AG04450 (cell line): ENCODE measurements at regions of chr5 and their contacts with region 1.

Region 1: DNA sequence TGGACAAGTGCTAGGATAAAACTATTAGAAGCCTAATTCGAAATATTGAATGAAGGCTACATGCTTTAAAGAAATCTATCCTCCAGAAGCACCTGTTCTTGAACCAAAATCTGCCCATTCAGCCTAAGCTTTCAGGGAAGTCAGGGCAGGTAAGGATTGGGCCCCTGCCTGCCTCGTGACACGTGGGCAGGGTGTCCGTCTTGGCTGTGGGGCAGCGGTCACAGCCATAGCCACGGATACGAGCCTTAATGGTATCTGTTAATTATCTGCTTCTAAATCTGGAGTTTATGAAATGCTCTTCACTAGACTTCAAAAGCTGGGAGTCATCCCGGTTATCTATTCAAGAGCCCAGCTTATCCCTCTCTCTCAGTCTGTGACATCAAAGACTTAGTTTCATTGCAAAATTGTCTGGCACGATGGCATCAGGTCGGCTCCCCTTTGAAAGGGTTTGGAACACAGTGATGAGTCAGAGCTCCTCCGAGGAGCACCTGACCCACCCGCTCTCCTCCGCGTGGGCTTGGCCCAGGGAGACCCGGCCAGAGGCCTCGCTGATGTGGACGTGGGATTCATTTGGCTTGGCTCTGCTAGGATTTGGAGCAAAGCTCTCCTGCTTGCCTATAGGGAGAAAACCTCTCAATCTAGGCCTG is 135.9 kb downstream of the MACROH2A1 start:
- DNase-seq: no peak
- H3K4me3 ChIP-seq: no peak overlapping the region
- H3K27ac ChIP-seq: no peak overlapping the region
- H3K27me3 ChIP-seq: no peaks in the 10 kb centered on the region
- CTCF ChIP-seq: no peak

Region 2: DNA sequence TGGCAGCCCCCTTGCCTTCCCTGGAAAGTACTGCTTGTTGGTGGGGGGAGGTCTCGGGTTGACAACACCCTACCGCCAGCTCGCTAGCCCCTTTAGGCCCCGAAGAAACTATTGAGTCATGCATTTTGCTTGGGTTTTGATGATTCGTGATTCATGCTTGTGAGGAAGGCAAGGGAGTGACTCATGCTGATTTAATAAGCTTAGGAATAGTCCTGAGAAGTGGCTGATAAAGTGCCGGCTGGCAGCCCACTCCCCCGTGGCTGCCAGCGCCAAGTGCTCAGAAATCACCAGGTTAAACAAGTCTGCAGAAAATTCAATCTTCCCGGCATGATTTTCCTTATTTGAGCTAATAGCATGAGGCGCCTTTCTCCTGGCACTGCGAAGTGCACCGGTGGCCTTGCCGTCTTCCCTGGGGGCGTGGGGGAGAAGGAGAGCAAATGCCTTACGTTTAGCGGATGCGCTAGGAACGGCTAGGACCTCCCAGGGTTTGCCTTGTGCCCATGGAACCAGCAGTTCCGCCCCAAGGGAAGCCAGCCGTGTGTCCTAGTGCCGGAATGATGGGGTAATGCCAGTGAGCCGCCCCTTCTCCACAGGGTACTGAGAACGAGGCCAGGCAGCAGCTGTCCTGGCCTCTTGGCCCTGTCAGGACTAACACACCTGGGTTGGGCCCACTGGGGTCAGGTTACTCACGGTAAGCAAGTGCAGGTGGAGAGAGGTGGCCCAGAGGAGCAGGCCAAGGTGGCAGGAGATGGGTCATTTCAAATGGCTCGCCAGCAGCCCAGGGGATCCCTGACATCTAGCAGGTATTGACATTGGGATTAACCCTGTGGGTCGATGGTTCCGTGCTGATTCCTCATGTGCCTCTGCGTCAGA is 16.0 kb before region 1 on chr5:
- CTCF ChIA-PET with region 1: interaction called, 8 read pairs
- POLR2A ChIA-PET with region 1: interaction called, 28 read pairs
- DNase-seq: peak; percentile 76
- H3K4me3 ChIP-seq: no peak overlapping the region
- H3K27ac ChIP-seq: peak overlapping the region; percentile 96
- H3K27me3 ChIP-seq: no peaks in the 10 kb centered on the region
- CTCF ChIP-seq: no peak

Region 3: DNA sequence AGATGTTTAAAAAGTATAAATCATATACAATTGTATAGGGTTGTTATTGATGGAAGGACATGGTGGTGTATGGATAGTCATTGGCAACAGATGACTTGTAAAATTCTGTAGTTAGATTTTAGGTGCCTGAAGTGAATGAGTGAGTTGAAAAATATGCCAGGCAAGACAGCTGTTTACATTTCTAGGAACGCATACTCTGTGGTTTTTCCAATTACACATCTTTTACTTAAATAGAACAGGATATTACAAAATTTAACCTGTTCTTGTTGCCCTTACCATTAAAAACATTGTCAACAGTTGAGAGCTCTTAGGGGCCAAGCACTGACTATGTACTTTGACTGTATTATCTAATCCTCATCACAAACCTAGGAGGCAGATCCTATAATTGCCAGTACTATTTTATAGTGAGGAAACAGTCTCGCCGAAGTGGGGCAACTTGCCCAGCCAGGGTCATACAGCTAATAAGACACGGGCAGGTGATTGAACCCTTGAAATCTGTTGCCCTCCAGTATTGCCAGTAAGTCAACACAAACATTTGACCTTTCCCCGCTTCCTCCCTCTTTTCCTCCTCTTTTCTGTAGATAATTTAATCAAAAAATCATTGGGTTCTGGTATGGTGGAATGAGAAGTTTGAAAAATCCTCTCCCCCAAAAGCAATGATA is 47.3 kb after region 1 on chr5:
- CTCF ChIA-PET with region 1: no interaction called
- POLR2A ChIA-PET with region 1: interaction called, 26 read pairs
- DNase-seq: peak; percentile 61
- H3K4me3 ChIP-seq: no peak overlapping the region
- H3K27ac ChIP-seq: no peak overlapping the region
- H3K27me3 ChIP-seq: no peaks in the 10 kb centered on the region
- CTCF ChIP-seq: no peak